PC-3 (cell line): ENCODE measurements at regions of chr10 and their contacts with region 1.

Region 1: GRCh38 chr10:15122477-15123030 is 25.4 kb downstream of the RPP38 start:
- DNase-seq: no peak
- ATAC-seq: no peak
- H3K4me3 ChIP-seq: no peak overlapping the region
- H3K27ac ChIP-seq: peak overlapping the region; percentile 98
- H3K4me1 ChIP-seq: peaks cover 43% of the 10 kb centered on the region
- H3K27me3 ChIP-seq: no peaks in the 10 kb centered on the region
- CTCF ChIP-seq: no peak

Region 2: GRCh38 chr10:15097011-15097812 is 25.3 kb before region 1 on chr10 and contains the start of gene RPP38:
- CTCF ChIA-PET with region 1: interaction called, 10 read pairs
- POLR2A ChIA-PET with region 1: interaction called, 13 read pairs
- intact Hi-C with region 1: no loop called
- DNase-seq: peak; percentile 85
- ATAC-seq: peak; percentile 85
- H3K4me3 ChIP-seq: peak within 1 kb of the TSS; percentile 94
- H3K27ac ChIP-seq: peak within 1 kb of the TSS; percentile 94
- H3K4me1 ChIP-seq: no peaks in the 10 kb centered on the region; the same call in 1 of the 2 replicates
- H3K27me3 ChIP-seq: no peaks in the 10 kb centered on the region
- CTCF ChIP-seq: no peak
- total RNA-seq, gene RPP38: 8.5 and 9.9 TPM in 2 replicates

Region 3: DNA sequence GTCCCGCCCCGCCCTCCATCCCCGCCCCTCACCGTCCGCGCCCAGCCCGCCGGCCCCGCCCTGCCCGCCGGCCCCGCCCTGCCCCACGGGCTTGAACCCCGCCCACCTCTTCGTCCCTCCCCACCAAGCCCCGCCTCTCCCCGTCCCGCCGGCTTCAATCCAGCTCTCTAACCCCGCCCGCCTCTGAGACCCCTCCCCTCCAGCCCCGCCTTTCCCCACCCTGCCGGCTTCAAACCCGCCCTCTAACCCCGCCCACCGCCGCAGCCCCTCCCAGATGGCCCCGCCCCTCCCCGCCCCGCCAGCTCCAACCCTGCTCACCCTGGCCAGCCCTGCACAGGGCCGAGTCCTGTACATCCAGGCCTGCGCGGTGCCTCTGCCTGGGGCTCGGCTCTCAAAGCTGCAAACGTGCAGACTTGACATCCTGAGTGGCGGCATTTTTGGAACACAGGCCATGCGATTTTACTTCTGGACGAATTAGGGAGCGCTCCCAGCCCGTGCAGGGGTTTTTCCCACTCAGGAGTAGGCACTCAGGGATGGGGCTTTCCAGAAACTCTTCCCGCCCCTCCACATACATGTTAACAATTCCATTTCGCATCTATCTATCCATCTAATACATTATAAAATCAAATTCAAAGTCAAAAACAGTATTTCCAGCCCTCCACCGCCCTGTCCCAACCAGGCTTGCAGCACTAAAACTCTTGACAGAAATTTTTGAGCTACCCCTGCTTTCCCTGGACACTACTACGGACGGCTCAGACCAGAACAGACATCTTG is 46.4 kb after region 1 on chr10:
- CTCF ChIA-PET with region 1: interaction called, 3 read pairs
- POLR2A ChIA-PET with region 1: interaction called, 3 read pairs
- intact Hi-C with region 1: loop called (anchors 5 kb)
- DNase-seq: peak; percentile 73
- ATAC-seq: peak; percentile 68
- H3K4me3 ChIP-seq: no peak overlapping the region
- H3K27ac ChIP-seq: no peak overlapping the region
- H3K4me1 ChIP-seq: peaks cover 13% of the 10 kb centered on the region; the same call in 1 of the 2 replicates
- H3K27me3 ChIP-seq: no peaks in the 10 kb centered on the region
- CTCF ChIP-seq: no peak

Region 4: DNA sequence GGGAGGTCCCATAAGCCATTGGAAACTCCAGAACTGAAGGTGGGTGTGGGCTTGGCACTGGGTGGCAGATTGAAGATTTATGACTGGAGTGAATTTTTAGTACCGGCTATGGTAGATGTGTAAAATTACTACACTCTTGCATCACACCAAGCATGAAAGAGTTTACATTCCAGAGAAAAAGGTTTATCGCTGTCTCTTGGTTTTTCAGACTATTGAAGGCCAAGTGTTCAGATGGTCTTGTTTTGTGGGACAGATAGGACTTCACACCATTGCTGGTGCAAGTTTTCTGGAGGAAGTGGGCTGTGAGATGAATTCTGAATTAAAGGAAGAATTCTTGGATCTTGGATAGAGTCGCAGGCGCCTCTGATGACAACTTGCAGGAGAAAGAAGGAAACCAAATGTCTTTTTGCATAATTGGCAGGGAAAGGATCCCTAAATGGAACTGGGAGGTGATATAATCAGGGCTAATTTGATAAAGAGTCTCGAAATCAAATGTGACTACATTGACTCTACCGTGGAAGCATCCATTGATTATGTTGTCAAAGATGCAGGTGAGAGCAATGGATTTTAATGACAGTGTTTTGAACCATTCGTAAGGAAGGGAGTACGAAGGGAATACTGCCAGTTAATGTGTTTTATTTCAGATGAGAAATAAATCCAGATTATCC is 60.1 kb after region 1 on chr10:
- CTCF ChIA-PET with region 1: no interaction called
- POLR2A ChIA-PET with region 1: no interaction called
- intact Hi-C with region 1: no loop called
- DNase-seq: no peak
- ATAC-seq: no peak
- H3K4me3 ChIP-seq: no peak overlapping the region
- H3K27ac ChIP-seq: no peak overlapping the region
- H3K4me1 ChIP-seq: no peaks in the 10 kb centered on the region
- H3K27me3 ChIP-seq: no peaks in the 10 kb centered on the region
- CTCF ChIP-seq: no peak

Region 5: DNA sequence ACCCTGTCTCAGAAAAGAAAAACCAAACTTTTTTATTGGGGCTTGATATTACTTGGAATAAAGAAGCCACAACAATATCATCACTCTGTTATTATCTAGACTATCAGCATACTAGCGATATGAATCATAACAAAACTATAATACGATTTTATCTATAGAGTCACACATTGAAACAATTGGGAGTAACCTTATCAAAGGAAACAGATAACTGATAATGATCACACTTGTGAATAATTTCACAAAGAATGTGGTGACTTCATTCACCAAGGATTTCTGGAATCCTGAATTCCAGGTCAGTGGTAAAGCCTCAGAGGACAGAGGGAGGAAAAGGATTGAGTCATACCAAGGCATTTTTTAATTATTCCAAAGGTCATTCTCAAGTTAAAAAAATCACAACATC is 78.1 kb after region 1 on chr10:
- CTCF ChIA-PET with region 1: no interaction called
- POLR2A ChIA-PET with region 1: no interaction called
- intact Hi-C with region 1: loop called (anchors 5 kb)
- DNase-seq: peak; percentile 89
- ATAC-seq: peak; percentile 72
- H3K4me3 ChIP-seq: no peak overlapping the region
- H3K27ac ChIP-seq: peak overlapping the region; percentile 57
- H3K4me1 ChIP-seq: peaks cover 49% of the 10 kb centered on the region
- H3K27me3 ChIP-seq: no peaks in the 10 kb centered on the region
- CTCF ChIP-seq: no peak

Region 6: DNA sequence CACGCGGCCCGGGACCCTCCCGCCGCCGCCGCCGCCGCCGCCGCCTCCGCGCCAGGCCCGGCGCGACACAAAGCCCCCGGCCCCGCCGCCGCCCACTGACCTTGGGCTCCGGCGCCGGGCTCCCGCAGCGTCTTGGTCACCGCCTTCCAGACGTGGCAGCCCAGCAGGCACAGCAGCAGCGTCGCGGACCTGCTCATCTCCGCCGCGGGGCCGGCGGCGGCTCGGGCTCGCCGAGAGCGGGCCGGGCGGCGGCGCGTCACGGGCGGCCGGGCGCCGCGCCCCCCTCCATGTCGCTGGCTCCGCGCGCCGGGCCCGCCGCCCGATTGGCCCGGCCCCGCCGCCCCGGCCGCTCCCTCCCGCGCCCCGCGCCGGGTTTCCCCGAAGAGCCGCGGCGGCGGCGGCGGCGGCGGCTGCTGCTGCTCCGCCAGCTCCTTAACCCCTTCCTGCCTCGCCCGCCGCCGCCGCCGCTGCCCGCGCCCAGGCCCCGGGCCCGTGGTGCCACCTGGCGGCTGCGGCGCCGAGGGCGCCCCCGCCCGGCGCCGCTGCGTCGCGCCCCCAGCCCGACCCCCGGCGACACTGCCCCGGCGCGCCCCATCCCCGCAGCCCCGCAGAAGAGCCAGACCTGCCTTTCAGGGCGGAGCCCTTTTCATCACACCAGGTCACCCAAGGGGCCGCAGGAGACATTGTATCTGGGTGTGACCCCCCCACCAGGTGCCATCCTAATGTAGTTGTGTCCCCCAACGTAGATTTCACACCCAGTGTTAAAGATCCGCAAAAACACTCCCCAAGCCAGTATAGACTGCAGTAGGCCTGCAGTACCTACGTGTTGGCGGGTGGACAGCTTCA is 248.5 kb after region 1 on chr10 and contains the start of gene FAM171A1:
- CTCF ChIA-PET with region 1: no interaction called
- POLR2A ChIA-PET with region 1: no interaction called
- intact Hi-C with region 1: loop called (anchors 5 kb)
- DNase-seq: peak; percentile 40
- ATAC-seq: peak; percentile 71
- H3K4me3 ChIP-seq: peak within 1 kb of the TSS; percentile 70
- H3K27ac ChIP-seq: no peak within 1 kb of the TSS
- H3K4me1 ChIP-seq: peaks cover 5% of the 10 kb centered on the region
- H3K27me3 ChIP-seq: no peaks in the 10 kb centered on the region
- CTCF ChIP-seq: no peak
- total RNA-seq, gene FAM171A1: 10.4 and 10.7 TPM in 2 replicates